A673 (cell line): ENCODE measurements at regions of chr11 and their contacts with region 1.

Region 1: DNA sequence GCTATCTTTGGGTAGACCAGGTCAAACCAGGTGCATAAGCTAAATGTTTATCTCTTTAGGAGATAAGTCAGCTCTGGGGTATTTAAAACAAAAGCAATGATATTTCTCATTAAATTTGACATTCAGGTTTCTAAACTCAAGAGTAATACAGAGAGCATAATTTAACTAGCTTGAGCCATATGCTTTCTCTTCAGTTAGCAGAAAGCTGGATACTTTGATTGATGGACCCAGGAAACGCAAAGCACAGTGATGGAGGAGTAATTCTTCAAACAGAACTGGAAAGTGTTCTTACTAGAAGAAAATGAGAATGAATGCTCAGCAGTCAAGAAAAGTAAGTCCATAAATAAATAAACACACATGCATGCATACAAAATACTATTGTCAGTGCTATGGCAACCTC is 885.7 kb upstream of the RAG2 start:
- DNase-seq: no peak
- H3K4me3 ChIP-seq: no peak overlapping the region
- H3K27ac ChIP-seq: no peak overlapping the region
- H3K4me1 ChIP-seq: no peaks in the 10 kb centered on the region
- H3K27me3 ChIP-seq: no peaks in the 10 kb centered on the region
- CTCF ChIP-seq: no peak

Region 2: DNA sequence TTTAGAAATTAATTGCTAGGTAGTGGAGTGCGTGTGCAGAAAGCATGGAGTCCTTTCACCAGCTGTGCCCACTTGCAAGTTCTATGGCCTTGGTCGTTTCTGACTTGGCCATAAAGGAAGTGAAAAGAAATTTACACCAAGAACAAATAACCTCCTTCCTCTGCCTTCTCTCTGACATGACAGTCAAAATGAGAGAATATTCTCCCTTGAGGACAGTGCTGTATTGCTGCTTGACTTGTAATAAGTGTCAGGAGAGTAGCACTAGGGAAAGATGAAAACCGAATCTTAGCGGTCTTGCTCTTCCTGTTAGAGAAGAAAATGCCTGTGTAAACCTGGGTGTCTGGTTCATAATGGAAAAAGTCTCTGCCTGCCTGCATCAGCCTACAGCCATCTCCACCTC is 552.6 kb before region 1 on chr11:
- CTCF ChIA-PET with region 1: no interaction called
- POLR2A ChIA-PET with region 1: interaction called, 17 read pairs
- intact Hi-C with region 1: no loop called
- DNase-seq: no peak
- H3K4me3 ChIP-seq: no peak overlapping the region
- H3K27ac ChIP-seq: no peak overlapping the region
- H3K4me1 ChIP-seq: peaks cover 9% of the 10 kb centered on the region
- H3K27me3 ChIP-seq: no peaks in the 10 kb centered on the region
- CTCF ChIP-seq: no peak